Heart left ventricle (tissue), 16 donors: ENCODE measurements at regions of chr17 and their contacts with region 1.

Region 1: GRCh38 chr17:44767493-44767892 is 8.7 kb downstream of the ADAM11 start:
- DNase-seq: no peak
- ATAC-seq: no peak
- H3K4me3 ChIP-seq: no peak overlapping the region
- H3K27ac ChIP-seq: no peak overlapping the region
- H3K4me1 ChIP-seq: peaks cover 0 to 3% (median 0%) of the 10 kb centered on the region in 12 donors
- H3K27me3 ChIP-seq: no peaks in the 10 kb centered on the region
- CTCF ChIP-seq: no peak
- POLR2A ChIP-seq: no peak

Region 2: GRCh38 chr17:44599298-44600175 is 168.0 kb before region 1 on chr17:
- intact Hi-C with region 1: no loop called
- DNase-seq: peak in 3 of 5 donors; percentile 28 to 43 (median 39)
- ATAC-seq: peak in 3 of 4 donors; percentile 49 to 60 (median 54)
- H3K4me3 ChIP-seq: no peak overlapping the region
- H3K27ac ChIP-seq: peak overlapping the region in 2 of 12 donors; percentile 13 to 29
- H3K4me1 ChIP-seq: peaks cover 0 to 6% (median 0%) of the 10 kb centered on the region in 12 donors
- H3K27me3 ChIP-seq: no peaks in the 10 kb centered on the region
- CTCF ChIP-seq: no peak
- POLR2A ChIP-seq: no peak

Region 3: DNA sequence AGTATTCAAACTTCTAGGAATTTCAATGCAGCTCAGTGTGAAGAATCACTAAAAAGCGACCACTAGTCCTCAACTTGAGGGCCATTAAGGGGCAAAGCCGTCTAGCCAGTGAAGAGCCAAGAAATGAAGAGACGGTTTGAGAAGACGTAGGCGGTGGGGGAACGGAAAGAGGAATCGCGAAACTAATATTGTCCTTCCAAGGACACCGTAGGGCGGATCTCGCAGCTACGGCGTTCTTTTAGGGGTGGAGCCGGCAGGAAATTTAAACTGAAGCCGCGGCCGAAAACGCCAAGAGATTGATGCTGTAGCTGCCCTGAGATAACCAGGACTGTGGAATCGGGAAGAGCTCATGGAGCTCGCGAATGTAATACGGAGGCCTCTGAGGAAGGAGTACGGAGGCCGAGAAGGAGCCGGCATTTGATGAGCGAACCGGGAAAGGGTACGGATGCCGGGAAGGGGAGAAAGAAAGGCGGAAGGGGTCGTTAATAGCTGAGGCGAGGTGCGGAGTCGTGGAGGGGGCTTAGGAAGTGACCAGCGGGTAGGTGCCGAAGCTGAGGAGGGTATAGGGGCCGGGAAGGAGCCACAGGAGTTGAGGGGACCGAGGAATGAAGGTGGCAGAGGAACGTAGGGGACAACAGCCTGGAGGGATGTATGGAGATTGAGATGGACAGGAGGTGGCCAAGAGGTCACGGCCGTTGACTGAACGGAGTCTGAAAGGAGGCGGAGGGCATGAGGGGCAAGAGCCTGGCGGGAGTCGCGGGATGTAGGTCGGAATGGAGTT is 58.9 kb before region 1 on chr17 and contains the start of gene DBF4B:
- intact Hi-C with region 1: loop called in 1 of 10 experiments (anchors 10 kb)
- DNase-seq: peak; percentile 78 to 90 (median 81)
- ATAC-seq: peak; percentile 63 to 92 (median 88)
- H3K4me3 ChIP-seq: peak within 1 kb of the TSS; percentile 49 to 90 (median 75)
- H3K27ac ChIP-seq: peak within 1 kb of the TSS; percentile 30 to 88 (median 82)
- H3K4me1 ChIP-seq: peaks cover 0 to 21% (median 9%) of the 10 kb centered on the region in 12 donors
- H3K27me3 ChIP-seq: peaks cover 0 to 4% (median 0%) of the 10 kb centered on the region in 9 donors
- CTCF ChIP-seq: no peak
- POLR2A ChIP-seq: peak in 1 of 2 donors; percentile 13
- total RNA-seq, gene DBF4B: 1.4 to 5.3 (median 4.2) TPM

Region 4: GRCh38 chr17:45307290-45308015 is 540.0 kb after region 1 on chr17:
- intact Hi-C with region 1: no loop called
- DNase-seq: no peak
- ATAC-seq: peak in 3 of 4 donors; percentile 5 to 25 (median 16)
- H3K4me3 ChIP-seq: no peak overlapping the region
- H3K27ac ChIP-seq: peak overlapping the region; percentile 42 to 95 (median 74)
- H3K4me1 ChIP-seq: peaks cover 8 to 100% (median 70%) of the 10 kb centered on the region in 12 donors
- H3K27me3 ChIP-seq: no peaks in the 10 kb centered on the region
- CTCF ChIP-seq: no peak
- POLR2A ChIP-seq: no peak